PC-3 (cell line): ENCODE measurements at regions of chr12 and their contacts with region 1.

Region 1: DNA sequence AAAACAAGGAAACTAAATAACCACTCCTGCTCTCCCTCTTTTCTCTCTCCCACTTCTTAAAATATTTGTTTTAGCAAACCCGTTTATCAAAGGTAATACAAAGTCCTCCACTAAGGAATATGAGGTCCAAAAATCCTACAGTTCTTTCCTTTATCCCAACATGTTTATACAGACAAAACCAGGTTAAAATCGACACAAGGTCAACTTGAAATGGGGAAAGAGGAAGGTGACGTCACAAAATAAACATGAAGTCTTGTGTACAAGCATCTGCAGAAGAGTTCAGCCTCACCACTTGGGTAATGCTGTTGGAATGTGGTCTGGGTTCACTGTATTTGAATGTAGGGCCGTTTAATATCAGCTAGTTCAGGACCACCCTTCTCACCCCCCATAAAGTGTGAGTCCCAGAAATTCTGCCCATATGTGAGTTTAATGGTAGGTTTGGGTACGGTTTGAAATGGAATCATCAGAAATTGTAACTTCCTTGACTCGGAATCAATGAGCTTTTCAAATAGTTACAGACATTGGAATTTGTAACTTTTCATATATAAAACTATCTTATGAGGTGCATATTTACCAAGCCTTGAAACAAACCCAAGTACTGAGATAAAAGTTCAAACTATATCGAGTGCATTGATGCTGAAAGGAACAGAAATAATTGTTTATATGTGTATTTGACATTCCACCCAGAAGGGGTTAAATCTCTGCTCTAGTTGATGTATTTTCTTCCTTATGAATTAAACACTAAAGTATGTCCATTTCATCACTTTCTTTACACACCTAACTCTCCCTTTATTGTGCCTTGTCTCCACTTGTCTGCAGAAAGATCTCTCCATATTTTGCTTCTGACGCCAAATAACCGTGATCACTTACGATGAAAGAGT is 120.1 kb upstream of the SLC38A2 start:
- DNase-seq: peak; percentile 89
- ATAC-seq: peak; percentile 53
- H3K4me3 ChIP-seq: no peak overlapping the region
- H3K27ac ChIP-seq: peak overlapping the region; percentile 43
- H3K4me1 ChIP-seq: peaks cover 48% of the 10 kb centered on the region
- H3K27me3 ChIP-seq: no peaks in the 10 kb centered on the region
- CTCF ChIP-seq: no peak

Region 2: DNA sequence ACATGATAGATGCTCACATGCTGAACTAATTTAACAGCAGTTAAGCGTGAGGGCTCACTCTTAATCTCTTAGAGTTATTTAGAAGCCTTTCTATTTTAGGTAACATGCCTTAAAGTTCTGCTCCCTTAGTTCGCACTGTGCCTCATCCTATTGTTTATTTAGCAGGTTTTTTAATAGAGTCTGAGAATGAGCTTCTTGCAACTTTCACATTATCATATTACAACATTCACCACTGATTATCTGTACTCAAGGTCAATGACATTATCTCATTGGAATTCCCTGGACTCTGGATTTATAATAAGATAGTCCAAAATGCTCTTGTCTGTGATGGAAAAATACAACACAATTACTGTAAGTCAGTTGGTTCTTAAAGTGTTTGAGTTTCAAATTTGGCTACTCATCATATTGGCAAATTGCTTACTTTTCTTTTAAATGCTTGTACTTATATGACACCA is 63.4 kb after region 1 on chr12:
- CTCF ChIA-PET with region 1: no interaction called
- POLR2A ChIA-PET with region 1: no interaction called
- intact Hi-C with region 1: loop called (anchors 2 kb)
- DNase-seq: peak; percentile 93
- ATAC-seq: peak; percentile 76
- H3K4me3 ChIP-seq: peak overlapping the region; percentile 41
- H3K27ac ChIP-seq: peak overlapping the region; percentile 96
- H3K4me1 ChIP-seq: peaks cover 87% of the 10 kb centered on the region
- H3K27me3 ChIP-seq: no peaks in the 10 kb centered on the region
- CTCF ChIP-seq: no peak

Region 3: GRCh38 chr12:46661110-46661845 is 168.6 kb after region 1 on chr12:
- CTCF ChIA-PET with region 1: no interaction called
- POLR2A ChIA-PET with region 1: no interaction called
- intact Hi-C with region 1: loop called (anchors 2 kb)
- DNase-seq: peak; percentile 80
- ATAC-seq: peak; percentile 53
- H3K4me3 ChIP-seq: no peak overlapping the region
- H3K27ac ChIP-seq: peak overlapping the region; percentile 56
- H3K4me1 ChIP-seq: peaks cover 57% of the 10 kb centered on the region
- H3K27me3 ChIP-seq: no peaks in the 10 kb centered on the region
- CTCF ChIP-seq: peak; percentile 87

Region 4: GRCh38 chr12:46675736-46676135 is 183.0 kb after region 1 on chr12:
- CTCF ChIA-PET with region 1: no interaction called
- POLR2A ChIA-PET with region 1: no interaction called
- intact Hi-C with region 1: loop called (anchors 5 kb)
- DNase-seq: peak; percentile 71
- ATAC-seq: no peak
- H3K4me3 ChIP-seq: no peak overlapping the region
- H3K27ac ChIP-seq: peak overlapping the region; percentile 68
- H3K4me1 ChIP-seq: peaks cover 44% of the 10 kb centered on the region
- H3K27me3 ChIP-seq: no peaks in the 10 kb centered on the region
- CTCF ChIP-seq: peak; percentile 65